Activated CD4-positive, alpha-beta memory T cell treated with anti-CD3 and anti-CD28 coated beads for 36 hours (primary cell): ENCODE measurements at regions of chr15 and their contacts with region 1.

Region 1: GRCh38 chr15:51726351-51727073 is 10.9 kb downstream of the LYSMD2 start:
- DNase-seq: peak; percentile 69
- H3K4me3 Mint-ChIP-seq: no peak overlapping the region
- H3K27ac Mint-ChIP-seq: no peak overlapping the region
- H3K4me1 Mint-ChIP-seq: peaks cover 64% of the 10 kb centered on the region
- H3K27me3 Mint-ChIP-seq: no peaks in the 10 kb centered on the region

Region 2: GRCh38 chr15:51681303-51681963 is 45.1 kb before region 1 on chr15 and contains the start of gene SCG3:
- CTCF ChIA-PET with region 1: no interaction called
- POLR2A ChIA-PET with region 1: no interaction called
- intact Hi-C with region 1: loop called (anchors 5 kb)
- DNase-seq: peak; percentile 78
- H3K4me3 Mint-ChIP-seq: no peak within 1 kb of the TSS
- H3K27ac Mint-ChIP-seq: no peak within 1 kb of the TSS
- H3K4me1 Mint-ChIP-seq: peaks cover 5% of the 10 kb centered on the region
- H3K27me3 Mint-ChIP-seq: peaks cover 32% of the 10 kb centered on the region
- total RNA-seq, gene SCG3: not detected